ENCODE measurements at regions of chr3 and their contacts with region 1.

Region 1: GRCh38 chr3:160413613-160414248 is 14.3 kb downstream of the SMC4 start:
- DNase-seq: peak; percentile 91
- H3K4me3 Mint-ChIP-seq: no peak overlapping the region
- H3K27ac Mint-ChIP-seq: no peak overlapping the region
- H3K4me1 Mint-ChIP-seq: peaks cover 30% of the 10 kb centered on the region
- H3K27me3 Mint-ChIP-seq: no peaks in the 10 kb centered on the region

Region 2: DNA sequence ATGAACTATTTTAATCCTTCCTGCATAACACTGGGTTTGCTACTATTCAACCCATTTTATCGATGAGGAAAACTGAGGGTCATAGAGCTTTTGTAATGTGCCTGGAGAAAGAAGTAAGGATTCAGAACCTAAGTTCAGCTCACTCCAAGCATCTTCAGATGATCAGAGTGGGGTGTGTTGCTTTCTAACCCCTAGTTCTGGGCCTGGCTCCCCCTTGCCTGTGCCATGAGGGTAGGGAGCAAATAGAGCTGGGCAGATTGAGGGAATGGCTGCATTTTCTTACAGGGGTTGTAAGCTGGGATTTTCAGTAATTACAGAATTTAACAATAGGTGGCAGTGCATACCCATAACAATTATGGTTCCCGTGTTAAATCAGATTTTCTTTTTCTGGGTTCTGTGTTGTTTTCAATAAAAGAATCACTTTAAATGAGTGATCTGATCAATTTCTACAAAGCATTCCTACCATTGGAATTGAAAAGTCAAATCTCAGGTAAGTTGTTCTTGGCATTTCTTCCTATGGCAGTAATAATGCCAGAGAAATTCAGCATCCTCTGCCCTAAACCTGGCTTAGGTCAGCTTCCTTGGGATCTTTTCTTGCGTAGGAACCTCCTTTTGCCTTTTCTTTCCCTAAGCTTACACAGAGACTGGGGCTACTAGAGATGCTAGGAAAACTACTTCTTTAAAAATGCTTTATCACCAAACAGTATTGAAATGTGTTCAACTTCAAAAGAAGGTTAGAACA is 528.9 kb before region 1 on chr3:
- intact Hi-C with region 1: loop called (anchors 1 kb)
- DNase-seq: peak; percentile 62
- H3K4me3 Mint-ChIP-seq: no peak overlapping the region
- H3K27ac Mint-ChIP-seq: no peak overlapping the region
- H3K4me1 Mint-ChIP-seq: no peaks in the 10 kb centered on the region
- H3K27me3 Mint-ChIP-seq: peaks cover 25% of the 10 kb centered on the region

Region 3: DNA sequence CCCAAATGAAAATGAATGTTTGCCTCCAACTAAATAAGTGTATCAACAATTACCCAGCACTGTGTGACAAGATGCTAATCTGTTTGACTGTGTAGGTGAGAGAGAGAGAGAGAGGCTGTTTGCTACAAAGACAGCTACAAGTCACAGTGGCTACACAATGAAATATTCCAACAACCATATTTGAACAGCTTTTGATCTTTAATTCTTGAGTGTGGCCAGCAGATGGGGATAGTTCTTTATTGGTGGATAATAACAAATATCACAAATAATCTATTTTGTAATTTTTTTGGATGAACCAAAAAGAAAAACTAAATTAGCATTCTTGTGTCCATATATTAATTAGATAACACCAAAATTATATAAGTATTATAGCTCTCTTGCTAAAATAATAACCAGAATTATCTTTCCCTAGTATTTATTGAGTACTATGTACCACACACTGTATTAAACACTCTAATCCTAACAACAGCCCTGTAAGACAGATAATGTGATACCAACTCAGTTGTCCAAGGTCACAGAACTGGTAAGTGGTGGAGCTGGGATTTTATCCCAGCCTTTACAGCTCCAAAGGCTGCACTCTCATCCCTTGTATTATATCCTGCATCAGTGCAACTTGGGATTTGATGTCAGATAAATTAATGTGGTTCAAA is 250.4 kb before region 1 on chr3:
- intact Hi-C with region 1: loop called (anchors 1 kb)
- DNase-seq: no peak
- H3K4me3 Mint-ChIP-seq: no peak overlapping the region
- H3K27ac Mint-ChIP-seq: no peak overlapping the region
- H3K4me1 Mint-ChIP-seq: no peaks in the 10 kb centered on the region
- H3K27me3 Mint-ChIP-seq: peaks cover 20% of the 10 kb centered on the region

Region 4: GRCh38 chr3:160312014-160312624 is 101.6 kb before region 1 on chr3:
- intact Hi-C with region 1: loop called (anchors 10 kb)
- DNase-seq: peak; percentile 58
- H3K4me3 Mint-ChIP-seq: no peak overlapping the region
- H3K27ac Mint-ChIP-seq: no peak overlapping the region
- H3K4me1 Mint-ChIP-seq: no peaks in the 10 kb centered on the region
- H3K27me3 Mint-ChIP-seq: no peaks in the 10 kb centered on the region

Region 5: GRCh38 chr3:160355826-160356225 is 57.9 kb before region 1 on chr3:
- intact Hi-C with region 1: no loop called
- DNase-seq: no peak
- H3K4me3 Mint-ChIP-seq: no peak overlapping the region
- H3K27ac Mint-ChIP-seq: no peak overlapping the region
- H3K4me1 Mint-ChIP-seq: no peaks in the 10 kb centered on the region
- H3K27me3 Mint-ChIP-seq: no peaks in the 10 kb centered on the region

Region 6: GRCh38 chr3:160434071-160434470 is 20.3 kb after region 1 on chr3:
- intact Hi-C with region 1: loop called (anchors 2 kb)
- DNase-seq: no peak
- H3K4me3 Mint-ChIP-seq: no peak overlapping the region
- H3K27ac Mint-ChIP-seq: no peak overlapping the region
- H3K4me1 Mint-ChIP-seq: peaks cover 26% of the 10 kb centered on the region
- H3K27me3 Mint-ChIP-seq: no peaks in the 10 kb centered on the region

Measured in activated CD4-positive, alpha-beta T cell treated with anti-CD3 and anti-CD28 coated beads, Interleukin-2, amount 10 ng/mL, durations not matched to agents 24 days and 14 days (primary cell).